ENCODE measurements at regions of chr12 and their contacts with region 1.

Region 1: DNA sequence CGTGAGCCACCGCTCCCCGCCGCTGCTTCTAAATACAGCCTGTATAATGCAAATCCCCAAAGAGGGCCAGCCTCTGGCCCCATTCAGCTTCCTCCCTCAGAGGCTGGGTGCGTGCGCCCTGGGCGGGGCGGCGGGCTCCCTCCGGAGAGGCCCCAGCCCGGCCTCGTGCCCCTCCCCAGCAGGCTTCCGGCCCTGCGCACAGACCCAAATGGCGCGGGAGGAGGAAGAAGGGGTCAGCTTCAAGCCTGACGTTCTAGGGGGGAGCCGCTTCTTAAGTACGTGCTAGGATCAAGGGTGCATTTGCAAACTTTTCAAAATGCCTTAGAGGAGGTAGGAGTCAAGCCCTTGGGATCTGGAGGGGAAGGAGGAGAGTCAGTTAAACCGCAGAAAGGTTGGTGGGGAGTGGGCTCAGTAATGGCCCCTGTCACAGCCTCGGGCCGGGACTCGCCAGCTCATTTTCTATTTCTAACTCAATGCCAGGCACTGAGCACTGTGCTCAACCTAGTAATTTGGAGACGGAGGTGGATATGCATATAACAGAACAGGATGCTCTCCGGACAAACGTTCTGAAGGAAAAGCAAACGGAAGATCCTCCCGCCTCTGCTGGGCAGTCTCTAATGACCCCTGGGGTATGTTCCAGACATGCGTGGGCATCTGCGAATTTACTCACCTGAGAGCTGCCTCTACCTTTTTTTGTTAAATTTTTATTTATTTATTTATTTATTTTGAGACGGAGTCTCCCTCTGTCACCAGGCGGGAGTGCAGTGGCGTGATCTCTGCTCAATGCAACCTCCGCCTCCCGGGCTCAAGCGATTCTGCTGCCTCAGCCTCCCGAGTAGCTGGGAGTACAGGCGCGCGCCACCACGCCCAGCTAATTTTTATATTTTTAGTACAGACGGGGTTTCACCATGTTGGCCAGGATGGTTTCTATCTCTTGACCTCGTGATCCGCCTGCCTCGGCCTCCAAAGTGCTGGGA is 32.3 kb downstream of the NINJ2 start:
- DNase-seq: peak; percentile 28
- H3K4me3 ChIP-seq: no peak overlapping the region
- H3K27ac ChIP-seq: peak overlapping the region; percentile 89
- H3K4me1 ChIP-seq: peaks cover 28% of the 10 kb centered on the region
- H3K27me3 ChIP-seq: no peaks in the 10 kb centered on the region
- CTCF ChIP-seq: no peak
- POLR2A ChIP-seq: no peak

Region 2: DNA sequence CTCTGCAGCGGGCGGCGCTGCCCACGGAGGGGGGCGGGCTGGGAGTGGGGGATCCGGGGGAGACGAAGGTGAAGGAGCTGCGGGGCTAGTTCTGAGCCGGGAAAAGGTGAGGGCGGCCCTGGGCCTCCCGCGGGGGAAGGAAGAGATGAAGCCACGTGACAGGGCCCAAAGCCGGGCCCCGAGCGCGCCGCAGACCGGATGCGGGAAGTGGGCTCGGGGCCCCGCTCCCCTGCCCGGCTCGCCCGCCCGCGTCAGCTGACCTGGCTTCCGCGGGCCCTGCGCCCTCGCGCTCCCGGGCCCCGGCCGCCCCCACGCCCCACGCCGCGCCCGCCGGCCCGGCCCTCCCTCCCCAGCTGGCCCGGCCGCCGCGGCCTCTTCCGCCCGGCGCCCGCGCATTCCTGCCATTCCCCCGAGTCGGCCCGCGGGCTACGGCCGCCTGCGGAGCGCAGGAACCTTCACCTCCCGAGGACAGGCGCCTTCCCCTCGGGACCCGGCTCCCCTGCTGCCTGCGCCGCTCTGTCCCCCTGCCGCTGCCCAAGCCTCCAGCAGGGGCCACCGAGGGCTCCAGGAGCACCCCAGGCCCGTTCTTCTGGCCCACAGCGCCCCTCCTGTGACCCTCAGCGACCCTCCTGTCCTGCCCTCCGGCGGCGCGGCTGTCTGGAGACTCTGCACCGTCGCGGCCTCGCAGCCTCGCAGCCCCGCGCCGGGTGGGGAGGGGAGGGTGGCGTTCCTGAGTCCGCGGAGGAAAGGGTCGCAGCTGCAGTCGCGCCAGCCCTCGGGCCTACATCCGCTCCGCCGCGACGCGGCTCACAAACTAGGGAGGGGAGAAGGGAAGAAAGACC is 11.9 kb after region 1 on chr12:
- CTCF ChIA-PET with region 1: no interaction called
- POLR2A ChIA-PET with region 1: no interaction called
- dilution Hi-C with region 1: no loop called
- intact Hi-C with region 1: loop called (anchors 1 kb)
- DNase-seq: peak; percentile 52
- H3K4me3 ChIP-seq: peak overlapping the region in 1 of 3 experiments; percentile 40
- H3K27ac ChIP-seq: peak overlapping the region; percentile 87
- H3K4me1 ChIP-seq: peaks cover 41% of the 10 kb centered on the region
- H3K27me3 ChIP-seq: no peaks in the 10 kb centered on the region
- CTCF ChIP-seq: peak; percentile 1 to 35
- POLR2A ChIP-seq: peak; percentile 66

Region 3: GRCh38 chr12:674272-674781 is 43.4 kb after region 1 on chr12:
- CTCF ChIA-PET with region 1: no interaction called
- POLR2A ChIA-PET with region 1: no interaction called
- dilution Hi-C with region 1: no loop called
- intact Hi-C with region 1: no loop called
- DNase-seq: peak; percentile 19
- H3K4me3 ChIP-seq: no peak overlapping the region
- H3K27ac ChIP-seq: no peak overlapping the region
- H3K4me1 ChIP-seq: peaks cover 11% of the 10 kb centered on the region
- H3K27me3 ChIP-seq: peaks cover 0 to 2% of the 10 kb centered on the region in 2 experiments
- CTCF ChIP-seq: no peak
- POLR2A ChIP-seq: no peak

Measured in endothelial cell of umbilical vein (primary cell).